HEK293 (cell line): ENCODE measurements at regions of chr14 and their contacts with region 1.

Region 1: DNA sequence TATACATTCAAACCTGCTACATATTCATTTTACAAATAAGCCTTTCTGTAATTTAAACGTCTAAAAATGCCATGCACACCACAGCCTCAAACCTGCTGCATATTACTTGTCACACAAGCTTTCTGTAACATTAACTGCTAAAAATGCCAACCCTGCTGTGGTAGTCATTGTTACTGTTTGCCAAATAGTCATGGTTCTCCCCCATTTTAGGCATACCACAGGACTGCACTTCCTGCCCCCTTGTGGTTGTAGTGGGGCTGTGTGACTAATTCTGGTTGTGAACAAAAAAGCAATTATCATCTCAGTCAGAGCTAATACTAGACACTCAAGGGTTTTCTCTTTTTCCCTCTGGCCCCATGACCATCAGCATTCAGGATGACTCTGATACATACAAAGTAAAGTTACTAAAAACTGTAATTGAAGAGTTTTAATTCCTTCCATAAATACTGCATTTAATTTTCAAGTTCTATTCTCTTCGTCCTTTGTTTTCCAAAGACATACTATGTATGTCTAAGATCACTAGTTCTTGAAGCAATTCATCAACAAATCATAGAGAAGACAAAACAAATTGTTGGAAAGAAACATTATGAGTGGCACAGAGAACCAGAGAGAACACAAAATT is 5.7 kb upstream of the SLC35F4 start:
- H3K4me3 ChIP-seq: no peak overlapping the region
- H3K27ac ChIP-seq: no peak overlapping the region
- H3K4me1 ChIP-seq: no peaks in the 10 kb centered on the region
- CTCF ChIP-seq: 0 out of 2 replicates have a peak, but pooled peaks have one; percentile 21

Region 2: GRCh38 chr14:57692671-57693070 is 178.9 kb before region 1 on chr14:
- CTCF ChIA-PET with region 1: interaction called, 61 read pairs
- POLR2A ChIA-PET with region 1: no interaction called
- H3K4me3 ChIP-seq: no peak overlapping the region
- H3K27ac ChIP-seq: no peak overlapping the region
- H3K4me1 ChIP-seq: no peaks in the 10 kb centered on the region
- CTCF ChIP-seq: no peak

Region 3: DNA sequence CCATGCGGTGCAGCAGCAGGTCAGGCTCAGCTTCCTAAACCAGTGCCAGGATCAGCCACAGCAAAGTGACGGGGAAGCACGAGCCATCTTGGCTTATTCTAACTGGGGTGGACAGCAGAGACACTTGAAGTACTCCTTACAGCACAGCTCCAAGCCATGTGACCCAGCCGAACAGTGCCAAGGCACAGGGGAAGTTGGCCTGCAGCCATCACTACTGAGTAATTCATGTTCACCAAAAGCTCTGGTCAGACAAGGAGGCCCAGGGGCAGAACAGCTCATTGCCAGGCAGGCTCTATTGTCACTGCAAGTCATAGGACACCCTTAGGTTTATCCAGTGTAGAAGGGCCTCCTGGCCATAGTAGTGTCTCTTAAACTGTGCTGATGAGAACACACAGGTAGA is 17.7 kb after region 1 on chr14:
- CTCF ChIA-PET with region 1: interaction called, 11 read pairs
- POLR2A ChIA-PET with region 1: no interaction called
- H3K4me3 ChIP-seq: no peak overlapping the region
- H3K27ac ChIP-seq: no peak overlapping the region
- H3K4me1 ChIP-seq: no peaks in the 10 kb centered on the region
- CTCF ChIP-seq: no peak